H1 (cell line): ENCODE measurements at regions of chr20 and their contacts with region 1.

Region 1: GRCh38 chr20:31630187-31630790 is 7.4 kb upstream of the COX4I2 start:
- DNase-seq: no peak
- H3K4me3 ChIP-seq: no peak overlapping the region
- H3K27ac ChIP-seq: no peak overlapping the region
- H3K4me1 ChIP-seq: no peaks in the 10 kb centered on the region; a peak in 2 of 7 replicates
- H3K27me3 ChIP-seq: no peaks in the 10 kb centered on the region
- CTCF ChIP-seq: no peak
- EP300 ChIP-seq: no peak
- POLR2A ChIP-seq: no peak
- RAD21 ChIP-seq: no peak

Region 2: GRCh38 chr20:31494131-31494530 is 136.2 kb before region 1 on chr20:
- CTCF ChIA-PET with region 1: no interaction called
- POLR2A ChIA-PET with region 1: no interaction called
- DNase-seq: peak in 1 of 2 experiments; percentile 67
- H3K4me3 ChIP-seq: no peak overlapping the region
- H3K27ac ChIP-seq: no peak overlapping the region
- H3K4me1 ChIP-seq: no peaks in the 10 kb centered on the region
- H3K27me3 ChIP-seq: no peaks in the 10 kb centered on the region
- CTCF ChIP-seq: peak; percentile 3 to 77 (median 55)
- EP300 ChIP-seq: no peak
- POLR2A ChIP-seq: no peak
- RAD21 ChIP-seq: peak in 1 of 2 experiments; percentile 22; a peak in 1 of 4 replicates

Region 3: GRCh38 chr20:31560094-31560899 is 70.0 kb before region 1 on chr20:
- CTCF ChIA-PET with region 1: interaction called, 1,559 read pairs
- POLR2A ChIA-PET with region 1: no interaction called
- DNase-seq: peak in 1 of 2 experiments; percentile 86
- H3K4me3 ChIP-seq: no peak overlapping the region
- H3K27ac ChIP-seq: peak overlapping the region; percentile 44; the same call in 1 of the 2 replicates
- H3K4me1 ChIP-seq: peaks cover 0 to 6% (median under 1%) of the 10 kb centered on the region in 4 experiments; a peak in 3 of 7 replicates
- H3K27me3 ChIP-seq: no peaks in the 10 kb centered on the region
- CTCF ChIP-seq: peak; percentile 96 to 100 (median 99)
- EP300 ChIP-seq: 0 out of 3 replicates have a peak, but pooled peaks of 1 of the 2 experiments have one; percentile 51
- POLR2A ChIP-seq: peak in 1 of 2 experiments; percentile 30; a peak in 2 of 3 replicates
- RAD21 ChIP-seq: peak; percentile 71 to 73

Region 4: DNA sequence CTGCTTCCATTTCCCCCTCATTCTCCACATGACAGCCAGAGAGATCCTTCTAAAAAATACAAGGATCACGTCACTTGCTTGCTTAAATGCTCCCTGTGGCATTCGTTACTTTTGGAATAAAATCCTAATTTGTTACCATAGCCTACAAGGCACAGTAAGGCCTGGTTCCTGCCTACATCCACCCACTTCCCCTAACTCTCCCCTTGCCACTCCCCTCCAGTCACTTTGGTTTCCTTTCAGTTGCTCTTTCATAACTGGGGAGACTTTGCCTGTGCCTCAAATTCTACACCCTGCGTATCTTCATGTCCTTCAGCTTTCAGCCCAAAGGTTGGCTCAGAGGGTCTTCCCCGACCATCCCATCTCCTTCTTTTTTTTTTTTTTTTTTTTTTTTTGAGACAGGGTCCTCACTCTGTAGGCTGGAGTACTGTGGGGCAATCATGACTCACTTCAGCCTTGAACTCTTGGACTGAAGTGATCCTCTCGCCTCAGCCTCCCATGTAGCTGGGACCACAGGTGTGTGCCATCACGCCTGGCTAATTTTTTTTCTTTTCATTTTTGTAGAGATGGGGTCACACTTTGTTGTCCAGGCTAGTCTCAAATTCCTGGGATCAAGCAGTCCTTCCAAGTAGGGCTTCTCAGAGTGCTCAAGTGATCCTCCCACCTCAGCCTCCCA is 12.7 kb before region 1 on chr20:
- CTCF ChIA-PET with region 1: interaction called, 38 read pairs
- POLR2A ChIA-PET with region 1: interaction called, 6 read pairs
- DNase-seq: no peak
- H3K4me3 ChIP-seq: no peak overlapping the region
- H3K27ac ChIP-seq: no peak overlapping the region
- H3K4me1 ChIP-seq: no peaks in the 10 kb centered on the region; a peak in 1 of 7 replicates
- H3K27me3 ChIP-seq: no peaks in the 10 kb centered on the region; a peak in 2 of 7 replicates
- CTCF ChIP-seq: no peak
- EP300 ChIP-seq: no peak
- POLR2A ChIP-seq: no peak
- RAD21 ChIP-seq: no peak

Region 5: GRCh38 chr20:31652917-31653396 is 22.7 kb after region 1 on chr20:
- CTCF ChIA-PET with region 1: interaction called, 51 read pairs
- POLR2A ChIA-PET with region 1: interaction called, 3 read pairs
- DNase-seq: no peak
- H3K4me3 ChIP-seq: no peak overlapping the region
- H3K27ac ChIP-seq: no peak overlapping the region
- H3K4me1 ChIP-seq: no peaks in the 10 kb centered on the region
- H3K27me3 ChIP-seq: no peaks in the 10 kb centered on the region
- CTCF ChIP-seq: no peak
- EP300 ChIP-seq: no peak
- POLR2A ChIP-seq: no peak
- RAD21 ChIP-seq: no peak

Region 6: GRCh38 chr20:31691646-31692275 is 61.5 kb after region 1 on chr20:
- CTCF ChIA-PET with region 1: interaction called, 11 read pairs
- POLR2A ChIA-PET with region 1: no interaction called
- DNase-seq: no peak
- H3K4me3 ChIP-seq: peak overlapping the region in 1 of 4 experiments; percentile 1; a peak in 1 of 8 replicates
- H3K27ac ChIP-seq: no peak overlapping the region
- H3K4me1 ChIP-seq: peaks cover 14 to 26% (median 20%) of the 10 kb centered on the region in 4 experiments
- H3K27me3 ChIP-seq: no peaks in the 10 kb centered on the region
- CTCF ChIP-seq: no peak
- EP300 ChIP-seq: no peak
- POLR2A ChIP-seq: no peak
- RAD21 ChIP-seq: no peak